Prostate gland (tissue), 2 donors: ENCODE measurements at regions of chr22 and their contacts with region 1.

Region 1: DNA sequence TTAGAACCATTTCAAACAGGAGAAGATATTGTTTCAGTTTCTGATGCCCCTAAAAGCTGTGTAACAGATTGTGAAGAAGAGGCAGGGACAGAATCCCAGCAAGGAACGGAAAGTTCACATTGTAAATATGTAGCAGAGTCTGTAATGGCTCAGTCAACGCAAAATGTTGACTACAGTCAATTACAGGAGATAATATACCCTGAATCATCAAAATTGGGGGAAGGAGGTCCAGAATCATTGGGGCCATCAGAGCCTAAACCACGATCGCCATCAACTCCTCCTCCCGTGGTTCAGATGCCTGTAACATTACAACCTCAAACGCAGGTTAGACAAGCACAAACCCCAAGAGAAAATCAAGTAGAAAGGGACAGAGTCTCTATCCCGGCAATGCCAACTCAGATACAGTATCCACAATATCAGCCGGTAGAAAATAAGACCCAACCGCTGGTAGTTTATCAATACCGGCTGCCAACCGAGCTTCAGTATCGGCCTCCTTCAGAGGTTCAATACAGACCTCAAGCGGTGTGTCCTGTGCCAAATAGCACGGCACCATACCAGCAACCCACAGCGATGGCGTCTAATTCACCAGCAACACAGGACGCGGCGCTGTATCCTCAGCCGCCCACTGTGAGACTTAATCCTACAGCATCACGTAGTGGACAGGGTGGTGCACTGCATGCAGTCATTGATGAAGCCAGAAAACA is 40.8 kb downstream of the IGLL1 start:
- DNase-seq: peak; percentile 88
- H3K4me3 ChIP-seq: no peak overlapping the region
- H3K27ac ChIP-seq: peak overlapping the region; percentile 77 to 88
- H3K4me1 ChIP-seq: peaks cover 8% of the 10 kb centered on the region
- H3K27me3 ChIP-seq: no peaks in the 10 kb centered on the region
- CTCF ChIP-seq: peak; percentile 83 to 99 (median 95)
- POLR2A ChIP-seq: no peak

Region 2: DNA sequence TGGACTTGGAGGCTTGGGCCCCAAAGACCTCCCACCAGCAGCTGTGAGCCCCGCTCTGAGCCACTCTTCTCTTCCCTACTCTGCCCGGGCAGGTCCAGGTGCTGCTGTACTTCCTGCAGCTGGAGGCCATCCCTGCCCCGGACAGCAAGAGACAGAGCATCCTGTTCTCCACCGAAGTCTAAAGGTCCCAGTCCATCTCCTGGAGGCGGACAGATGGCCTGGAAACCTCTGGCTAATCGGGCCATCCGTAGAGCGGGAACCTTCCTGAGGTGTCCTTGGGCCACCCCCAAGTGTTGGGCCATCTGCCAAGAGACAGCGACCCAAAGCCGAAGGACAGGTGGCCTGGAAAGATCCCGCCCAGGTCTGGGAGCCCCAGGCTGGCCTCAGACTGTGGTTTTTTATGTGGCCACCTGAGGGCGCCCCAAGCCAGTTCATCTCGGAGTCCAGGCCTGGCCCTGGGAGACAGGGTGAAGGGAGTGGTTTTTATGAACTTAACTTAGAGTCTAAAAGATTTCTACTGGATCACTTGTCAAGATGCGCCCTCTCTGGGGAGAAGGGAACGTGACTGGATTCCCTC is 223.9 kb before region 1 on chr22:
- intact Hi-C with region 1: loop called (anchors 5 kb)
- DNase-seq: peak; percentile 57
- H3K4me3 ChIP-seq: no peak overlapping the region
- H3K27ac ChIP-seq: no peak overlapping the region
- H3K4me1 ChIP-seq: no peaks in the 10 kb centered on the region
- H3K27me3 ChIP-seq: no peaks in the 10 kb centered on the region
- CTCF ChIP-seq: peak in 3 of 4 experiments; percentile 57 to 75 (median 74)
- POLR2A ChIP-seq: no peak

Region 3: DNA sequence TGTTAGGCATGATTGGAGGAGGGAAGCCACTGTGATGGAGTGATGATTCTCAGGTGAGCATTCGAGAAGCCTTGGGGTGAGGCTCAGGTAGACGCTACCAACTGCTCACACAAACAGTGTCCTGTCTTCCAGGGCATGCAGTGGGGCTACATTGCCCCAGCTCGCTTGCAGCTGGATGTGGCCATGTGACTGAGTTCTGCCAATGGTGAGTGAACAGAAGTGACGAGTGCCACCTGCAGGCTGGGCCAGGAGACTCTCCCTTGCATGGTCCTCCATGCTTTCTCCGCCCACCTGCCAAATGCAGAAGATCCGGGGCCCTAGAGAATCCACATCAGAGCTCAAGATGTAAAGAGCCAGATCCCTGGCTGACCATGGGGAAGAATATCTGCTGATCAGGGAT is 163.0 kb before region 1 on chr22:
- intact Hi-C with region 1: no loop called
- DNase-seq: no peak
- H3K4me3 ChIP-seq: no peak overlapping the region
- H3K27ac ChIP-seq: no peak overlapping the region
- H3K4me1 ChIP-seq: no peaks in the 10 kb centered on the region
- H3K27me3 ChIP-seq: no peaks in the 10 kb centered on the region
- CTCF ChIP-seq: peak in 1 of 4 experiments; percentile 22
- POLR2A ChIP-seq: no peak

Region 4: GRCh38 chr22:23402275-23403151 is 136.8 kb before region 1 on chr22:
- intact Hi-C with region 1: loop called (anchors 2 kb)
- DNase-seq: peak; percentile 87
- H3K4me3 ChIP-seq: peak overlapping the region; percentile 40 to 56
- H3K27ac ChIP-seq: peak overlapping the region; percentile 65 to 66
- H3K4me1 ChIP-seq: peaks cover 4% of the 10 kb centered on the region
- H3K27me3 ChIP-seq: no peaks in the 10 kb centered on the region
- CTCF ChIP-seq: peak; percentile 26 to 90 (median 66)
- POLR2A ChIP-seq: peak; percentile 58

Region 5: DNA sequence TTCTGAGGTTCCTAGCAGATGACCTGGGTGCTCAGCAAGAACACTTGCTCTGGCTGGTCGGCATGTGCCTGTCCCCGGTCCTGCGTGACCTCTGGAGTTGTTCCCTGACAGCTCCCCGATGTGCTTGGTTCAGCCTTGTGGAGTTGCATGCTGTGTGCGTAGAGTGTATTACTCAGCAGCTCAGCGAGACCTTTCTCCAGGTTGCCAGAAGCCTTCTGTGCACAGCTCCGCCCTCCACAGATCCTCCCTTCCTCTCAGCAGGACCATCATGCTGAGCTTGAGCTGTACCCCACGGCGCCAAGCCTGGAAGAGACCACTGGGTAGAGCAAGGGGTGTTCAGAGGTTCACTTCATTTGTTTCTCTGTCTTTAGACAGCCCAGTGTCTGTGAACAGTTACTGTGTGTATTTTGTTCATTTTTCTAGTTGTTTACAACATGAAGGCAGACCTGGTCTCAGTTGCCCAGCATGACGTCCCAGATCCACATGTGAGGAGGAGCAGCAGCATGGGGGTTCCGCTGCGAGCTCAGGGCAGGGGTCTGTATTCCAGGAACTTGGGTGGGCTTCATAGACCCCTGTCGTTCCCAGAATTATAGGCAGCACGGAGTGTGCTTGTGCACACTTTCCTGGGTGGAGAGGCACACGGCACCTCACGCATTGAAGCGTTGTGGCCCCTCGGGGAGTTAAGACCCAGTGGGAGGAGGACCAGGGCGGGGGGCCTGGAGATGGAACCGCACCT is 107.8 kb before region 1 on chr22:
- intact Hi-C with region 1: no loop called
- DNase-seq: no peak
- H3K4me3 ChIP-seq: no peak overlapping the region
- H3K27ac ChIP-seq: no peak overlapping the region
- H3K4me1 ChIP-seq: no peaks in the 10 kb centered on the region
- H3K27me3 ChIP-seq: no peaks in the 10 kb centered on the region
- CTCF ChIP-seq: no peak
- POLR2A ChIP-seq: no peak

Region 6: DNA sequence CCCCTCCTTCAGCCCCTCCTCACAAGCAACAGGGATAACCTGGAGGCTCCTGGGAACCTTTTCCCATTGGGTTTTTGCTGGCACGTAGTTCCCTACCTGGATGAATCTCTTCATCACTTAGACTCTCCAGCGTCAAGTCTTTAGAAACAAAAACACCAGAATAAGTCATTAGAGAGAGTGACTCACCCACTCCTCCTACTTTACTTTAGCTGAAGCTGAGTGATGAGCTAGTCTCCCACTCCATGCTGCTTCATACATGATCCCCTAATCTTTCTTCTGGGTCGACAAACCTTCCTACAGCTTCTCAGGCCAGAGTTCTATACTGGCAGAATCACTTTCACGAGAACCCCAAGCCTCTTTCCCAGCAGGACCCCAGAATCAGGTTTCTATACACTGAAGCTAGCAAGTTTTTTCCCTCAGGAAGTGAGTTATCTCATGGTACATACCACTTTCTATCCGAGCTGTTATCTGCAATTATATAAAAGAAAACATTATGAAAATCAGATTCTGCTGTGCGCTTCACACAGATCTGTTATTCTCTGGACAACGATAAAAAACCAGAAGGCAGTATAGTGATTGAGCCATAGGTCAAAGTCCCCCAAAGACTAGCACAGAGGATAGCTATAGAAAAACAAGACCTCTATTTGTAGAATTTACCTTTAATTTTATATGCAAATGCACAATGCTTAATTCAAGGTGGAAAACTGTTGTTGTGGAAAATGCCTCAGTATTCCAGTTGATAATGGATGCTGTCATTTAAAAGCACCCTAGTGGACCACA is 74.1 kb after region 1 on chr22:
- intact Hi-C with region 1: no loop called
- DNase-seq: no peak
- H3K4me3 ChIP-seq: no peak overlapping the region
- H3K27ac ChIP-seq: no peak overlapping the region
- H3K4me1 ChIP-seq: no peaks in the 10 kb centered on the region
- H3K27me3 ChIP-seq: no peaks in the 10 kb centered on the region
- CTCF ChIP-seq: no peak
- POLR2A ChIP-seq: no peak

Region 7: GRCh38 chr22:23767673-23768548 is 228.6 kb after region 1 on chr22 and contains the start of gene CHCHD10:
- intact Hi-C with region 1: loop called (anchors 5 kb)
- DNase-seq: peak; percentile 81
- H3K4me3 ChIP-seq: peak within 1 kb of the TSS; percentile 54 to 59
- H3K27ac ChIP-seq: peak within 1 kb of the TSS; percentile 78 to 84
- H3K4me1 ChIP-seq: peaks cover 6% of the 10 kb centered on the region
- H3K27me3 ChIP-seq: no peaks in the 10 kb centered on the region
- CTCF ChIP-seq: peak; percentile 64 to 86 (median 78)
- POLR2A ChIP-seq: peak; percentile 83
- total RNA-seq, gene CHCHD10: 17.3 to 59.3 TPM

Region 8: DNA sequence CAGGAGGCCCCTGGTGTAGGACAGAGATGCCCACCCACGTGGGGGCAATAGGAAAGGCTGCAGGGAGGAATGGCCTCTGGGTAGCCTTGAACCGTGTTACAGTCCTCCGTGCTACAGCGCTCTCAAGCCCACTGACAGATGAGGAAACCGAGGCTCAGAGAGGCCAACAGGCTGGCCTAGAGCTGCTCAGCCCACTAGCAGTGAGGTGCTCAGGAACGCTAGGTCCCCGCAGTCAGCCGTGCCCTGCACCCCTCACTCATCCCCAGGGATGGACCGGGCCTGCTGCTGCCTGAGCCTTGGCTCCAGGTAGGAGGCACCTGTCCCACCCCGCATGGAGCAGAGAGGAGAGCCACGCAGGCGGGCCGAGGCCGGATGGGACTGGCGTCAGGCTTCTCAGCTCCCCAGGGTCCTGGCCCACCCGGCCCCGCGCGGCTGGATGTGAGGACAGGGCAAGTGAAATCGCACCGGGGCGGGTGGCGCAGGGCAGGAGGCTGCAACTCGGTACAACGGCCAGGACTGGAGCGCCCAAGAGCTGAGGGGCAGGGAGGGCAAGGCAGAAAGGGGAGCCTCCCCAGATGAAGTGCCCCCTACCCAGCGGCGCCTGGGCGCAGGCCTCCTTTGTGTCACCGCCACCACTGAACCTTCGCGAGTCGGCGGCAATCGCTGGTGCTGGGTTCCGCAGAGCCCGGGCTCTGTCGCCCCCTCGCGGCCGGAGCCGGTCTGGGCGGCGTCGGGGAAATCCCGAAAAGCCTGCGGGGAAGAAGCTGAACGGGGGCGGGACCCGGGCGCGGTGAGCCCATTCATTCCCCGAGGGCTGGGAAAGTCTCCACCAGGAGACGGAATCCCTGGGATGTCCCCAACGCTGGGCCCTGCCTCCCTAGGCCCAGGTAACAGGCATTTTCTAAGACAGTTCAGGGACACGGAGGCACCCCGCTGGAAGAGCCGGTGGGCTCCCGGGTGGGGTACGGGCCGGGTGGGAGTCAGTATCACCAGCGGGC is 310.0 kb after region 1 on chr22:
- intact Hi-C with region 1: loop called (anchors 5 kb)
- DNase-seq: peak; percentile 66
- H3K4me3 ChIP-seq: no peak overlapping the region
- H3K27ac ChIP-seq: no peak overlapping the region
- H3K4me1 ChIP-seq: peaks cover 5% of the 10 kb centered on the region
- H3K27me3 ChIP-seq: no peaks in the 10 kb centered on the region
- CTCF ChIP-seq: peak; percentile 91 to 97 (median 96)
- POLR2A ChIP-seq: no peak